ENCODE measurements at regions of chr7 and their contacts with region 1.

Region 1: DNA sequence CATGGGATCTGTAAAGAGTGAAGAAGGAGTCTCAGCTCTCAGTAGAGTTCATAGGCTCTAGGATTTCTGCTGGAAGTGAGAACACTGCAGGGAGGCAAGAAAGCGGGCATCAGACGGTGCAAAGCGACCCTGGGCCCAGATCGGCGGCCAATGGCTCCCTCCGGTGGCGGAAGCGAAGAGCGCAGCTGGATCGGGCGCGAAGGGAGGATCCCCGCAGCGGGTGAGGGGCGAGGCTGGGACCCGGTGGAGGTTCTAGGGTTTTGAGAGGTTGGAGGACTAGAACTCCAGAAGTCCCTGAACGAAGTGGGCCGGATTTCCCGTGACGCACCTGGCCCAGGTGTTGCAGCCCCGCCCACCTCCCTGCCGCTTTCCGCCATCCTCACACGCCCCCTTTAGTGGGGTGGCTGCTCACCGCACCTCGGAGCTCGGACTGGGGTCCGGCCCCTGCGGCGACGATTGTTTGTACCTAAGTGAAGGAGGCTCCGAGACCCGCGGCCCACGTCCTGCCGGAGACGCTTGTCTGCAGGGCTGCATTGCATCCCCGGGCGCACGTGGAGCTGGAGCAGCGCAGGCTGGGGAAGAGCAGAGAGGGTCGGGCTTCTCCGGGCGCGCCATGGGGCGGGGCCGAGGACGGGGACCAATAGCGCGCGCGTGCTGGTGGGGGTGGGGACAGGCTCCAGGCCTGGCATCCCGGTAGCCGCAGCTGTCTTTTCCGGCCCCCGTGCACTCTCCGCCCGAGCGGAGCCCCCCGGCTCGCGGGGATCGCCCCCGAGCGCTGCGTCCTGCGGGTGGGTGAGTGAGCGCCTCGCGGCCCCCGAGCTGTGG is at the start of gene SLC12A9:
- DNase-seq: peak; percentile 94
- total RNA-seq, gene SLC12A9: 6.9 TPM

Region 2: GRCh38 chr7:100803398-100804233 is 48.6 kb before region 1 on chr7:
- intact Hi-C with region 1: loop called (anchors 1 kb)
- DNase-seq: peak; percentile 79

Region 3: DNA sequence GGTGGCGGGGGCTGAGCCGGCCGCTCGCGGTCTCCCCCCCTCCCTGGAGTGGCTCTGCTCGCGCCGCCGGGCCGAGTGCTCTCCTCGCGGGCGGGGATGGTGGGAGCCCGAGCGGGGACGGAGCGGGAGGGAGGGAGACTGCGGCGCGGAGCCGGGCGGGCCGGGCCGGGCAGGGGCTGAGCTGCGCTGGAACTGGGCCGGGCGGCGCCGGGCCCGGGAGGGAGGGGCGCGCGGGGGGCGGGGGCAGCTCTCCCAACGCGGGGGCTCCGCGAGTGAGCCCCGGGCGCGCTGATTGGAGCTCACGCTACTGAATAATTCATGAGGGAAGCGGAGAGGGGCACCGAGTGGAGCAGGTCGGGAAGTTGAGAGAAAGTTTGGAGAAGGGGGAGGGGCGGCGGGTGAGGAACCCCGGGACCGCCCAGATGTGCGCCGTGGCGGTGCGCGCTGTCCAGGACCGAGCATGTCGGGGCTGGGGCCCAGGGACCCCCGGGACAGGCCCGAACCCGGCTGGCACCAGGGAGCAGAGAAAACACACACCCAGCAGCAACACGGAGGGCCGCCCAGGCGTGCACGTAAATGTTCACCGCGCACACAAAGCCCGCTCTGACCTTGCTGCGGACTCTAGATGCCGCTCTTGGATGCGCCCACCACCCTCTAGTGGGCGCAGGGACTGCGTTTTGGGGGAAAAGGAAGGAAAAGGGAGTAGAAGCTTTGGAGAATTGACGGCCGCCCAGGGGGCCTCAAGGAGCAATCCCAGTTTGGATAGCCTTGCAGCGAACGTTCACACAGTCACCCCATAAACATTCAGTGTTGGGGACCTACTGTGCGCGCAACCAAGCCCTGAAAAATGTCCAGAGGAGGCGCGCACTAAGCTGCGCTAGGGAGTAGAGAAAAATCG is 24.7 kb before region 1 on chr7 and contains the start of gene EPHB4:
- intact Hi-C with region 1: no loop called
- DNase-seq: peak; percentile 88
- total RNA-seq, gene EPHB4: 23.9 TPM

Measured in cardiac septum (tissue), 1 donor.